Activated CD4-positive, alpha-beta T cell treated with anti-CD3 and anti-CD28 coated beads, Interleukin-2, amount 10 ng/mL, durations not matched to agents 24 days and 14 days (primary cell): ENCODE measurements at regions of chr10 and their contacts with region 1.

Region 1: GRCh38 chr10:80472234-80473095 is 18.4 kb downstream of the TSPAN14 start:
- DNase-seq: peak; percentile 80
- H3K4me3 Mint-ChIP-seq: peak overlapping the region; percentile 79
- H3K27ac Mint-ChIP-seq: peak overlapping the region; percentile 99
- H3K4me1 Mint-ChIP-seq: peaks cover 79% of the 10 kb centered on the region
- H3K27me3 Mint-ChIP-seq: no peaks in the 10 kb centered on the region

Region 2: GRCh38 chr10:80205478-80206276 is 266.8 kb before region 1 on chr10 and contains the start of gene ANXA11:
- intact Hi-C with region 1: loop called (anchors 5 kb)
- DNase-seq: peak; percentile 94
- H3K4me3 Mint-ChIP-seq: peak within 1 kb of the TSS; percentile 84
- H3K27ac Mint-ChIP-seq: peak within 1 kb of the TSS; percentile 94
- H3K4me1 Mint-ChIP-seq: peaks cover 45% of the 10 kb centered on the region
- H3K27me3 Mint-ChIP-seq: no peaks in the 10 kb centered on the region
- total RNA-seq, gene ANXA11: 223 and 232 TPM in 2 replicates

Region 3: DNA sequence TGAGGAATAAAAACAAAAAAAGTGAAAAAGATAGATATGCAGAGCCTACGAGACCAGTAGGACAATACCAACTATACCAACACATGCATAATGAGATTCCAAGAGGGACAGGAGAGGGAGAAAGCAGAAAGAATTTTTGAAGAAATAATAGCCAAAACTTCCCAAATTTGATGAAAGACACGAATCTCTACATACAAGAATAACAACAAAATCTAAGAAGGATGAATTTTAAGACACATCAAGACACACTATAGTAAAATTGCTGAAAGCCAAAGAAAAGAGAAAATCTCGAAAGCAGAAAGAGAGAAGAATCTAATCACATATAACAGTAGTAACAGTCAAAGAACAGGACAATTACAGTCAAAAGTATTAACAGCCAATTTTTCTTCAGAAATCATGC is 175.5 kb before region 1 on chr10:
- intact Hi-C with region 1: no loop called
- DNase-seq: no peak
- H3K4me3 Mint-ChIP-seq: no peak overlapping the region
- H3K27ac Mint-ChIP-seq: no peak overlapping the region
- H3K4me1 Mint-ChIP-seq: no peaks in the 10 kb centered on the region
- H3K27me3 Mint-ChIP-seq: peaks cover 4% of the 10 kb centered on the region

Region 4: GRCh38 chr10:80408242-80409101 is 64.0 kb before region 1 on chr10 and contains the start of gene PRXL2A:
- intact Hi-C with region 1: loop called (anchors 2 kb)
- DNase-seq: peak; percentile 95
- H3K4me3 Mint-ChIP-seq: peak within 1 kb of the TSS; percentile 90
- H3K27ac Mint-ChIP-seq: peak within 1 kb of the TSS; percentile 96
- H3K4me1 Mint-ChIP-seq: peaks cover 31% of the 10 kb centered on the region
- H3K27me3 Mint-ChIP-seq: peaks cover 27% of the 10 kb centered on the region
- total RNA-seq, gene PRXL2A: 14.8 and 16.4 TPM in 2 replicates

Region 5: GRCh38 chr10:80421707-80422536 is 50.5 kb before region 1 on chr10:
- intact Hi-C with region 1: no loop called
- DNase-seq: no peak
- H3K4me3 Mint-ChIP-seq: no peak overlapping the region
- H3K27ac Mint-ChIP-seq: no peak overlapping the region
- H3K4me1 Mint-ChIP-seq: peaks cover 2% of the 10 kb centered on the region
- H3K27me3 Mint-ChIP-seq: no peaks in the 10 kb centered on the region

Region 6: DNA sequence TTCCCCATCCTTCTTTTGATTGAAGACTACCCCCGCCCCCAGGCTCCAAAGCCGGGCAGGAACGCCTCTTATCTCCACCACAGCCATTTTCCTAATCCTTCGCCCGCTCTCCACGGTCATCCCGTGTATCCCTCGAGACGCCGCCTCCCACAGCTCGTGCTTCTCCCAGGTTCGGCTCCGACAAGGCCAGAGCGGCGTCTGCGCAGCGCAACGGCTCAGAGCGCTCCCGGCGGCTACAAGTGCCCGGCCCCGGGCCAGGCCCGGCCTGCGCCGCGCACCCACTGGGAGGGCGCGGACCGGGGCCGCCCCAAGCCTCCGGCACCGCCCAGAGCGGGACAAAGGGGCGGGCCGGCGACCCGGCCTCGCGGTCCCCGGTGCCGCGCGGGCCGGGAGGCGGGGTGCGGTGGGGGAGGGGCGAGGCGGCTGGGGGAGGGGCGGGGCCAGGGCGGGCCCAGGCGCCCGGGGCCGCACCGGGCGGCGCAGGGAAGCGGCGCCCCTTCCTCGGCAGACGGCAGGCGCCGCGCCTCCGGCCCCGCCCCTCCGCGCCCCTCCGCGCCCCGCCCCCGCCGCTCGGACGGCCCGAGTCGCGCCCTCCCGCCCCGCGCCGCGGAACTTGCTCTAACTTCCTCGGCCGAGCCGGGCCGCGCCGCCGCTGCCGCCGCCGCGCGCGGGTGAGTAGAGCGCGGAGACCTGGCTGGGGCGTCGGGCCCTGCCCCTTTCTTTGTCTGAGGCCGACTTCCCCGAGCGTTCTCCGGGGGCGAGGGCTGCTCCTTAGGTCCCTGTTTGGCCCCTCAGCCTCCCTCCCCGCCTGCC is 18.6 kb before region 1 on chr10 and contains the start of gene TSPAN14:
- intact Hi-C with region 1: loop called (anchors 1 kb)
- DNase-seq: peak; percentile 94
- H3K4me3 Mint-ChIP-seq: peak within 1 kb of the TSS; percentile 98
- H3K27ac Mint-ChIP-seq: peak within 1 kb of the TSS; percentile 88
- H3K4me1 Mint-ChIP-seq: peaks cover 41% of the 10 kb centered on the region
- H3K27me3 Mint-ChIP-seq: no peaks in the 10 kb centered on the region
- total RNA-seq, gene TSPAN14: 57.8 and 61.7 TPM in 2 replicates

Region 7: GRCh38 chr10:80459047-80459931 is 13.2 kb before region 1 on chr10:
- intact Hi-C with region 1: loop called (anchors 1 kb)
- DNase-seq: peak; percentile 91
- H3K4me3 Mint-ChIP-seq: peak overlapping the region; percentile 98
- H3K27ac Mint-ChIP-seq: peak overlapping the region; percentile 88
- H3K4me1 Mint-ChIP-seq: peaks cover 84% of the 10 kb centered on the region
- H3K27me3 Mint-ChIP-seq: no peaks in the 10 kb centered on the region

Region 8: GRCh38 chr10:80487791-80488538 is 15.5 kb after region 1 on chr10:
- intact Hi-C with region 1: loop called (anchors 1 kb)
- DNase-seq: peak; percentile 90
- H3K4me3 Mint-ChIP-seq: peak overlapping the region; percentile 77
- H3K27ac Mint-ChIP-seq: peak overlapping the region; percentile 92
- H3K4me1 Mint-ChIP-seq: peaks cover 88% of the 10 kb centered on the region
- H3K27me3 Mint-ChIP-seq: no peaks in the 10 kb centered on the region